CD4-positive, alpha-beta memory T cell (primary cell): ENCODE measurements at regions of chrX and their contacts with region 1.

Region 1: DNA sequence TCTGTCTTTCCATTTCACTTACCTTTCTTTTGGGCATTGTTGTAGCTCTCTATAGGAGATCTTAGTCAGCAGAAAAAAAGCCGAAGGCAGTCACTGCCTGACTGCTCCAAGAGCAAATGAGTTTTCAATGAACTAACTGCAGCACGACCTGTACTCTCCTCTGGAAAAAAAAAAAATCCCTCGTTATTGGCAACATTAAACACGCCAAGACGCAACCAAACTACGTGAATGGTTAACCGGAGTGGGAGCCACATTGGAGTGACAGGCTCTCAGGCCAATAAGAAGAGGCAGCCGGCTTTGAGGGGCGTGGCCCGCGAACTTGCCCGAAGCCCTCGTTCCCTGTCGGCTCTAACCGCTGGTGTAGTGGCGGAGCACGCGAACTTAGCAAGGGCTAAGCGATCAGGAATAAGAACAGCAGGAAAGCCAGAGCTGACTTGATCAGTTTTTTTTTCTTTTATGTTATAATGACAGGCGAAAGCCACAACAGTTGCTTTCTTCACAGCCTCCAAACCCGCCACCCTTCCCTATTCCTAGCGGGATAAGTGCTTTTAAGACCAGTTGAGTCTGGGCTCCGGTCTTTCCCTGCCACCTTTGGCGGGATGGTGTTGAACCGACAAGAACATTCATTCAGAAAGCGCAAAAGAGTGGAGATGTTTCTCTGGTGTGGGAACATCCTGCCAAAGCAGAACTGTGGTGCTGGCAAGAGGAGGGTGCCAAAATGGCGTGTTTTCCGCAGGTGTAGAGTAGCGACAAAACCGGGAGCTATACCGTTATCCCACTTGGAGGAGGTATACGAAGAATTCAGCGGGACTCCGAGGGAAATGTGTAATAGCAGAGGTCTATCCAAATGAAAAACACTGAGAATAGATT is 80.0 kb downstream of the HMGN5 start:
- DNase-seq: peak; percentile 84 to 88 (median 85)
- H3K4me3 ChIP-seq: peak overlapping the region; percentile 62 to 86
- H3K4me3 Mint-ChIP-seq: peak overlapping the region; percentile 87 to 98 (median 94)
- H3K27ac ChIP-seq: peak overlapping the region; percentile 37
- H3K27ac Mint-ChIP-seq: peak overlapping the region; percentile 27 to 96 (median 78)
- H3K4me1 ChIP-seq: no peaks in the 10 kb centered on the region
- H3K4me1 Mint-ChIP-seq: peaks cover 3 to 15% (median 7%) of the 10 kb centered on the region in 4 donors
- H3K27me3 ChIP-seq: no peaks in the 10 kb centered on the region
- H3K27me3 Mint-ChIP-seq: peaks cover 1 to 2% of the 10 kb centered on the region in 2 donors

Region 2: GRCh38 chrX:80808160-80808735 is 313.5 kb before region 1 on chrX:
- CTCF ChIA-PET with region 1: no interaction called
- POLR2A ChIA-PET with region 1: interaction called, 3 read pairs
- intact Hi-C with region 1: loop called (anchors 1 kb)
- DNase-seq: peak; percentile 77 to 85 (median 80)
- H3K4me3 ChIP-seq: peak overlapping the region; percentile 73 to 80
- H3K4me3 Mint-ChIP-seq: peak overlapping the region; percentile 89 to 97 (median 94)
- H3K27ac ChIP-seq: peak overlapping the region; percentile 88
- H3K27ac Mint-ChIP-seq: peak overlapping the region; percentile 94 to 98 (median 96)
- H3K4me1 ChIP-seq: peaks cover 44% of the 10 kb centered on the region
- H3K4me1 Mint-ChIP-seq: peaks cover 14 to 45% (median 26%) of the 10 kb centered on the region in 4 donors
- H3K27me3 ChIP-seq: no peaks in the 10 kb centered on the region
- H3K27me3 Mint-ChIP-seq: peaks cover 0 to 6% of the 10 kb centered on the region in 2 donors

Region 3: DNA sequence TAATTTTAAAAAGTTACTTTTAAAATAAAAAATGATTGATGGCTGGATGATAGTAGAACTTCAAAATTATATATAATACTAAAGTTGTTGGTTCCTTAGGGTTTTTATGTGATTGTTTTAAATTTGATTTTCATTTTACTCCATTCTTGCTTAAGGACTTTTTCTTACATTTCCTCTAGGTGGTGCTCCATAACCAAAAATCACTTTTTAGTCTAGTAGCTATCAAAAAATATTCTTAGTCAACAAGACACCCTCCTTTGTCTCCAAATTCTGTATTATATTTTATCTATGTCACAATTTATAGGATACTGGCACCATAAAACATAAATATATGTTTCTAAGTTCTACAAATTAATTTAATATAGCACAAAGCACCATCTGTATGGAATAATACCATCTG is 244.9 kb before region 1 on chrX:
- CTCF ChIA-PET with region 1: no interaction called
- POLR2A ChIA-PET with region 1: no interaction called
- intact Hi-C with region 1: loop called (anchors 1 kb)
- DNase-seq: peak in 4 of 5 donors; percentile 16 to 32 (median 26)
- H3K4me3 ChIP-seq: no peak overlapping the region
- H3K4me3 Mint-ChIP-seq: no peak overlapping the region
- H3K27ac ChIP-seq: no peak overlapping the region
- H3K27ac Mint-ChIP-seq: no peak overlapping the region
- H3K4me1 ChIP-seq: no peaks in the 10 kb centered on the region
- H3K4me1 Mint-ChIP-seq: no peaks in the 10 kb centered on the region
- H3K27me3 ChIP-seq: no peaks in the 10 kb centered on the region
- H3K27me3 Mint-ChIP-seq: no peaks in the 10 kb centered on the region

Region 4: DNA sequence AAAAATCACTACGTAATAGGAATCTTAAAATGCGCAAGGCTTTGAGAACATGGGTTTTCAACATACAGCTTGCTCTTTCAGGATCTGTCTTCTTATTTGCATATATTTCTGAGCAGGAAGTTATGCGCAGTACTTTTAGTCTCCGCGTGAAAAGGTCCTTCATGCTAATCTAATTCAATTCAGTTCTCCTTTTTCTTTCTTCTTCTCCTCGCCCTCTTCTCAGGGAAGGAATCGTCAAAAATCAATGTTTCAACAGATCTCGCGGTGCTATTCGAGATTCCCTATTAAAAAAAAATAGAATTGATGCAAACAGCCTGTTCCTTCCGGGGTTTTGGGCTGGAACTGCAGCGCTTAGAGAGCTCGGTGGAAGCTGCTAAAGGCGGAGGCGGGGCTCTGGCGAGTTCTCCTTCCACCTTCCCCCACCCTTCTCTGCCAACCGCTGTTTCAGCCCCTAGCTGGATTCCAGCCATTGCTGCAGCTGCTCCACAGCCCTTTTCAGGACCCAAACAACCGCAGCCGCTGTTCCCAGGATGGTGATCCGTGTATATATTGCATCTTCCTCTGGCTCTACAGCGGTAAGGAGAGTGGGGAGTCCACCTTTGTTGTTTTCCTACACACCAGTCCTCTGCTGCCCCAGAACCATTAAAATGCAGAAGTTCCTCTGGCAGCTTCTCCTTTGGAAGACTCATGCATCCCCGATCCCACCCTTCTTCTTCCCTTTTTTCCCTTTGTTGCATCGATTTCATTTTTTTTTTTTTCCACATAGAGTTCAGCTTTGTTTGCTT is 80.1 kb after region 1 on chrX and contains the starts of genes HMGN5 and SH3BGRL:
- CTCF ChIA-PET with region 1: interaction called, 4 read pairs
- POLR2A ChIA-PET with region 1: no interaction called
- intact Hi-C with region 1: loop called (anchors 2 kb)
- DNase-seq: peak; percentile 70 to 77 (median 76)
- H3K4me3 ChIP-seq: peak within 1 kb of the TSS; percentile 84 to 88
- H3K4me3 Mint-ChIP-seq: peak within 1 kb of the TSS; percentile 85 to 98 (median 94)
- H3K27ac ChIP-seq: peak within 1 kb of the TSS; percentile 74
- H3K27ac Mint-ChIP-seq: peak within 1 kb of the TSS; percentile 92 to 97 (median 94)
- H3K4me1 ChIP-seq: peaks cover 38% of the 10 kb centered on the region
- H3K4me1 Mint-ChIP-seq: peaks cover 22 to 68% (median 36%) of the 10 kb centered on the region in 4 donors
- H3K27me3 ChIP-seq: no peaks in the 10 kb centered on the region
- H3K27me3 Mint-ChIP-seq: no peaks in the 10 kb centered on the region
- total RNA-seq, gene HMGN5: 1.8 to 2.7 TPM
- total RNA-seq, gene SH3BGRL: 81.4 to 86.5 TPM